ENCODE measurements at regions of chr11 and their contacts with region 1.

Region 1: GRCh38 chr11:128172046-128172878 is 415.1 kb downstream of the ETS1 start:
- DNase-seq: peak; percentile 69
- H3K4me3 ChIP-seq: no peak overlapping the region
- H3K27ac ChIP-seq: peak overlapping the region; percentile 72
- H3K4me1 ChIP-seq: peaks cover 8% of the 10 kb centered on the region
- H3K27me3 ChIP-seq: no peaks in the 10 kb centered on the region
- CTCF ChIP-seq: peak; percentile 81 to 84

Region 2: DNA sequence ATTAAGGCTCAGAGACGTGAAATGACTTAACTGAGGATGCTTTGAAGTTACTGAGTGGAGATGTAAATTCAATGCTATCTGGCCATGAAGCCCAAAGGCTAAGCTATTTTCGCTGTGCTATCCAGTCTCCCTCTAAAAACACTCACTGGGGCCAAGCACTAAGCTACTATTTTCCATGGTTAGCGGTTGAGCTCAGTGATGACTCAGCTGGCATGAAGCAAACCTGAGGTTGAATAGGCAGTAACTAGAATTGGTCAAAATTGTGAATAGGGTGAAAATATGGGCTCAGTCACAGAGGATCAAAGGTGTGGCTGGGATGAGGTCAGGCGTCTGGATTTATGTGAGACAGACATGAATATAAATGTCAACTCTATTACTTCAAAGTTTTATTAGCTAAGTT is 607.5 kb before region 1 on chr11:
- CTCF ChIA-PET with region 1: no interaction called
- dilution Hi-C with region 1: no loop called
- in situ Hi-C with region 1: no loop called
- intact Hi-C with region 1: no loop called
- DNase-seq: peak; percentile 32
- H3K4me3 ChIP-seq: no peak overlapping the region
- H3K27ac ChIP-seq: no peak overlapping the region
- H3K4me1 ChIP-seq: no peaks in the 10 kb centered on the region
- H3K27me3 ChIP-seq: no peaks in the 10 kb centered on the region
- CTCF ChIP-seq: no peak

Region 3: GRCh38 chr11:128095466-128095981 is 76.7 kb before region 1 on chr11:
- CTCF ChIA-PET with region 1: no interaction called
- dilution Hi-C with region 1: no loop called
- in situ Hi-C with region 1: no loop called
- intact Hi-C with region 1: no loop called
- DNase-seq: peak; percentile 83
- H3K4me3 ChIP-seq: no peak overlapping the region
- H3K27ac ChIP-seq: peak overlapping the region; percentile 75
- H3K4me1 ChIP-seq: peaks cover 12% of the 10 kb centered on the region
- H3K27me3 ChIP-seq: no peaks in the 10 kb centered on the region
- CTCF ChIP-seq: peak; percentile 23 to 32

Region 4: DNA sequence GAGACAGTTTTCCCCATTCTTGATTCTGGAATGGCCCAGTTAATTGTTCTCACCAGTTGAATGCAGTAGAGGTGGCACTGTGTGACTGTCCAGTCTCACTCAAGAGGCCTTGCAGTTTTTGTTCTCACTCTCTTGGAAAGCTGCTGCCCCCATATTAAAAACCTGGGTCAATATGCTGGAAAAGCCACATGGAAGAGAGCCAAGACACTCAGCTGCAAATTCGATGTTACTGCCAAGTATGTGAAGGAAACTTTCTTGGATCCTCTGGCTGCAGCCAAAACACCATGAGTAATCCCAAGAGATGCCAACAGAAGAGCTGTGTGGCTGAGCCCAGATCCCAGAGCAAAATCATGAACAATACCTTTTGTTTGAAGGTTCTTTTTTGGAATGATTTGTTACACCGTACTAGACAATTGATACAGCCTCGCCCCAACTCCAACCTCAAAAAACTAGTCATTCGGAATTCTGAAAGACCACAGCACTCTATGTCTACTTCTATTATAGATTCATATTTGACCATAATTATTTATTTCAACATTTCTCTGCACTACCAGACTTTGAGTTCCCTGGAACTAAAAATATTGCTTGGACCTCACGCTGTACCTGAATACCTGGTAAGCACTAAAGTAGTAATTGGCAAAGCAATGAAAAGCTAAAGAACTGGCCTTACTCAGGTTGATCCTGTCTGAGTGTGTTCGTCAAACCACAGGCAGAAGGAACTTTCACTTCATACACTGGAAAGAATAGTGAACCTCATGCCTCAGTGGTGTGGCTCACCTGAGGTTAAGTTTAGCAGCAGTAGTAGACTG is 36.3 kb after region 1 on chr11:
- CTCF ChIA-PET with region 1: interaction called, 5 read pairs
- dilution Hi-C with region 1: no loop called
- in situ Hi-C with region 1: no loop called
- intact Hi-C with region 1: loop called (anchors 1 kb)
- DNase-seq: peak; percentile 94
- H3K4me3 ChIP-seq: peak overlapping the region in 1 of 3 experiments; percentile 1
- H3K27ac ChIP-seq: peak overlapping the region; percentile 94
- H3K4me1 ChIP-seq: peaks cover 57% of the 10 kb centered on the region
- H3K27me3 ChIP-seq: no peaks in the 10 kb centered on the region
- CTCF ChIP-seq: no peak

Region 5: DNA sequence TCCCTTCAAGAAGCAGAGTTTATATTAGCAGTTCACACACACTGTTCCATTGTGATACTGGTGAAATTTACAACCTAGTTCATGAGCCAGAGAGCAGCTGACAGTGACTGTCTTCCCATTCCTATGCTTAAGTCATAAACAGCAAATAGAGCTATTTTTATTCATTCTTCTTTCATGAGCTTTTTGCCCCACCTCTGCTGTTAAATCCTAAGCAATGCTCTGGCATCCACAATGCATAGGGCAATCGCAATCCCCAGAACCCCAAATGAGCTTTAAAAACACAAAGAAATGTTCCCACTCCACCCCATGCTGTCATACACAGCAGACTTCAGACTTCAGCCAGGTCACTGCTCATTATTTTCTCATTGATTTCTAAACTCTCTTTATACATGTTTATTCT is 107.6 kb after region 1 on chr11:
- CTCF ChIA-PET with region 1: no interaction called
- dilution Hi-C with region 1: loop called (anchors 10 kb)
- in situ Hi-C with region 1: loop called (anchors 10 kb)
- intact Hi-C with region 1: no loop called
- DNase-seq: peak; percentile 26
- H3K4me3 ChIP-seq: no peak overlapping the region
- H3K27ac ChIP-seq: peak overlapping the region; percentile 59
- H3K4me1 ChIP-seq: peaks cover 9% of the 10 kb centered on the region
- H3K27me3 ChIP-seq: no peaks in the 10 kb centered on the region
- CTCF ChIP-seq: no peak

Region 6: DNA sequence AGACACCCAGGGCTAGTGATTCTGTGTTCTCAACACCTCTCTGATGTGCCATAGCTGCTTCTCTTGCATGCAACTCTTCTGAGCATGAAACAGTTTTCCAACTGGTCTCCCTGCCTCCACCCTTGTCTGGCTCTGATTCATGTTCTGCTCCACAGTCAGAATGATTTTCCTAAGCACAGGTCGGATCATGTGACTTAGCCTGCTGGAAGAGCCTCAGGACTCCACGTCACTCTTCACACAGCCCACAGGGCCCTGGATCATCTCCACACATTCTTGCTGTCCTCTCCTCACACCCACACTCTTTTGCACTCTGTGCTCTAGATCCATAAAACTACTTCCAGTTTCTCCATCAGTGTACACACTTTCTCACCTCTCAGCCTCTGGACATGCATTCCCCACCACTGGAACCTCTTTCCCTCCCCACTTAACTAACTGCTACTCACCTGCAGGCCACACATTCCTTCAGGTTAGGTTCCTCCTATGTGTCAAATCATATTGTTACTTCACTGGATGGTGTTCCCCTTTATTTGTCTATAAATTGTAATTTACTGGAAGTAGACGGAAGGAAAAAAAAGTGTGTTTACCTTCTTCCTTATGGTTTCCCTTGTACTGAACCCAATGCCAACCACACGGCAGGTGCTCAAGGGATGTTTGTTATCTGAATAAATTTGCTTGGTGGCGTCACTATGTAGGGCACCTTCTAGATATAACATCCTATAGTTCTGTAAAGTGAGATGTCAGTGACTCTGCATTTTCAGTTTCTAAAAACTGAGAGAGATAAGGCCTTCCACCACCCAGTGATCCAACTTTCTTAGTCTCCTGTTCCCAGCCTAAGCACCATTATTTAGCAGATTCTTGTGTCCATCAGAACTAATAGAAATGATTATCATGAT is 281.4 kb after region 1 on chr11:
- CTCF ChIA-PET with region 1: no interaction called
- dilution Hi-C with region 1: no loop called
- in situ Hi-C with region 1: no loop called
- intact Hi-C with region 1: loop called (anchors 2 kb)
- DNase-seq: peak; percentile 94
- H3K4me3 ChIP-seq: no peak overlapping the region
- H3K27ac ChIP-seq: peak overlapping the region; percentile 67
- H3K4me1 ChIP-seq: peaks cover 56% of the 10 kb centered on the region
- H3K27me3 ChIP-seq: no peaks in the 10 kb centered on the region
- CTCF ChIP-seq: no peak

Region 7: DNA sequence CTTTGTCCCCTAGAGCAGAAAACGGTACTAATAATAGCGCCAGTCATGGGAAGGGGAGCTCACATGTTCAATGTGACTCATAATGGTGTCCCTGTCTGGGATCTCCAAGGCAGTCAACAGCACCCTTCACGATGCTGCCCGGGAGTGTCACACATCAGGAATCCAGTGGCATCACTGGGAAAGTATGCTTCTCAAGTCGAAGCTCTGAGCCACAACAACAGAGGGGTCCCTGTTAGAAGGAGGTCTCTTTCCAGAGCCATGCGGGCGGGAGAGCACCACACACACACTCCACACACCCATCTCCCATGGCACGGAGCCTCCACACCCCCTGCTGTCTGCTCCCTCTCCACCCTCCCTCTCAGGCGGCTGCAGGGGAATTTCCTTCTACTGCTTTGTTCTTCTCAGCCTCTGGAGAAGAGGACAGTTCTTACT is 295.4 kb after region 1 on chr11:
- CTCF ChIA-PET with region 1: interaction called, 13 read pairs
- dilution Hi-C with region 1: no loop called
- in situ Hi-C with region 1: no loop called
- intact Hi-C with region 1: loop called (anchors 1 kb)
- DNase-seq: peak; percentile 93
- H3K4me3 ChIP-seq: no peak overlapping the region
- H3K27ac ChIP-seq: peak overlapping the region; percentile 59
- H3K4me1 ChIP-seq: peaks cover 26% of the 10 kb centered on the region
- H3K27me3 ChIP-seq: no peaks in the 10 kb centered on the region
- CTCF ChIP-seq: peak in 1 of 2 donors; percentile 30

Measured in mammary epithelial cell (primary cell).